Activated naive CD4-positive, alpha-beta T cell treated with anti-CD3 and anti-CD28 coated beads for 36 hours (primary cell): ENCODE measurements at regions of chr6 and their contacts with region 1.

Region 1: DNA sequence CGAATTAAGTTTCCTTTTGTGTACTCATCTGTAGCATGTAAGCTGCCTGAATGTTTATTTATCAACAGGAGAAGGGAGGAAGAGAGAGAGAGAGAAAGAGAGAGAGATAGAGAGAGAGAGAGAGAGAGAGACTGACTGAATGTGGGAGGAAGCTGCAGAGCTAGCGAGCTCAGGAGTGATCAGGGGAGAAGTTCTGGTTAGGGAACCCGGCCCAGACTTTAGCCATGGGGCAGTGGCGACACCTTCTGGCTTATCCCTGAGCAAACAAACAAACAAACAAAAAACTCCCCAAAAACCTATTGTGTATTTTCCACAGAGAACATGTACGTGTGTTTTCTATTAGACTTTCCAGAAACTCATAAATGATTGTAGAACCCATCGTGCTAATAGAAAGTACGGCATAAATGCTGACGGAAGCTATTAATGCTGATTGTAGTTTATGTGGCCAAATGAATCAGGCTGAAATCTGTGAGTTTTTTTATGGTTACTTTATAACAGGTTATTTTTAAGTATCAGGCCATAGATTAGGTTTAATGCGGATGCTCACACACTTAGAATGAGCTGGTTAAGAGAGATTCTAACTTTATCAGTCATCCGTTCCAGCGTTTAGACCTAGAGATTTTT is 92.8 kb downstream of the CLIC5 start:
- DNase-seq: peak; percentile 83
- H3K4me3 Mint-ChIP-seq: no peak overlapping the region
- H3K27ac Mint-ChIP-seq: peak overlapping the region; percentile 71
- H3K4me1 Mint-ChIP-seq: peaks cover 34% of the 10 kb centered on the region
- H3K27me3 Mint-ChIP-seq: peaks cover 12% of the 10 kb centered on the region

Region 2: DNA sequence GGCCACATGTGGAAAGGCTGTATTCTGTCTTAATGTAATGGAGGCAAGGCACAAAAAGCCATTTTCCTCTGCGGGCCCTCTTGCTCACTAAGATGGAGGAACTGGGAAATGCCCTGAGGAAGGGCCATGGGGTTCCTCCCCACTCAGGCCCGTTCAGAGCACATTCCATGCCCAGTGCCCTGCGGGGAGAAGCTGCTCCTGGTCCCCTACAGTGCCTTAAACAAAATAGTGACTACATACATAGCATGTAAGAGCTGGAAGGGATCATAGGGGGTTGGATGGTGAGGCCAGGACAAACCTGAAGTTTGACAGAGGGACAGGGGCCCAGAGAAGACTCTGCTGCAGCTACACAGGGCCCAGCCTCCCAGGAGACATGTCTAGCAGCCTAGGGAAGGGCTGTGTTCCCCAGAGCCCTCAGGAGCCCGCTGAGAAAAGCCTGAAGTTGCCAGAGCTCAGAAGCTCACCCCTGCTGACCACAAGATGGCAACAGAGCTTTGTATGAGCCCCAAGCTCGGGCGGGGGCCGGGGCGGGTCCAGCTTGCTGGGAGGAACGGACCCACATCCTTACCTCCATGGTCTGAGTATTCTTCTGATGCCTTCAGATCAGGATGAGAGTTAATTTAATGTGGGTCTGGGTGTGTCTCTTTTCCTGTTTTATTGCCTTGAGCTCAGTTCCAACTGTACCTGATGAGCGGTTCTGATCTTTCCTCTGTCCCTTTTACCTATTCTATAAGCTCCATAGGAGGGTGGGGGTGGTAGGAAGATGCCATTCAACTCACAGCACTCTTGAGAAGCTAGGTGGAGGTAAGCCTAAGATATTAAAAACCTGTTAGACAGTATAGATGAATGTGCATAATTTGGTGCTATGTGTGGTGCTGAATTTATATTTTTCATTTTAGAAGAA is 1292.5 kb before region 1 on chr6:
- CTCF ChIA-PET with region 1: interaction called, 4 read pairs
- intact Hi-C with region 1: loop called (anchors 5 kb)
- DNase-seq: peak; percentile 50
- H3K4me3 Mint-ChIP-seq: no peak overlapping the region
- H3K27ac Mint-ChIP-seq: no peak overlapping the region
- H3K4me1 Mint-ChIP-seq: peaks cover 13% of the 10 kb centered on the region
- H3K27me3 Mint-ChIP-seq: no peaks in the 10 kb centered on the region

Region 3: DNA sequence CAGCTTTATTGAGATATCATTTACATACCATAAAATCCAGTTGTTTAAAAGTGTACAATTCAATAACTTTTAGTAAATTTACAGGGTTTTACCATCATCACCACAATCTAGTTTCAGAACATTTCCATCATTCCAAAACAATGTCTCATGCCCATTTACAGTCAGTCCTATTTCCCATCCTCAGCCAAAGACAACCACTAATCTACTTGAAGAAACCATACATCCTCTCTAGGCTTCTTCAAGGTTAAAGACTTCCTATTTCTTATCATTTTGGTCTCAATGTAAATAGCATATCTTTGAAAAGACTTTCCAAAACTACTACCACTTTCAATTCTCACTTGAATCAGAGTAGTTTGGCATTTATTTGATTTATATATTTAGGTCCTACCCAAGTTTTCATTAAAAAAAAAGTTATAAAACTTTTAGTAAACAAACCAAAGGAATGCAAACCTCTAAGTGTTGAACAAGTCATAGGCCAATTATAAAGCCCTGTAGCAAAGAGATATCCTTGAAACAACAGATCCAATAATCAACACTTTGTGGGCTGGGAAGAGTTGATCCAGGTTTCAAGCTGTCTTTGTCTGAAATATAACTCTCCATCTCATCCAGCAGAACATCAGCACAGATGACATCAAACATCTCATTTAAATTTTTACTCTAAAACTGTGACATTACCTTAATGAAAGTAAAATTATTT is 806.0 kb before region 1 on chr6:
- CTCF ChIA-PET with region 1: no interaction called
- intact Hi-C with region 1: loop called (anchors 10 kb)
- DNase-seq: no peak
- H3K4me3 Mint-ChIP-seq: no peak overlapping the region
- H3K27ac Mint-ChIP-seq: peak overlapping the region; percentile 52
- H3K4me1 Mint-ChIP-seq: peaks cover 24% of the 10 kb centered on the region
- H3K27me3 Mint-ChIP-seq: no peaks in the 10 kb centered on the region

Region 4: DNA sequence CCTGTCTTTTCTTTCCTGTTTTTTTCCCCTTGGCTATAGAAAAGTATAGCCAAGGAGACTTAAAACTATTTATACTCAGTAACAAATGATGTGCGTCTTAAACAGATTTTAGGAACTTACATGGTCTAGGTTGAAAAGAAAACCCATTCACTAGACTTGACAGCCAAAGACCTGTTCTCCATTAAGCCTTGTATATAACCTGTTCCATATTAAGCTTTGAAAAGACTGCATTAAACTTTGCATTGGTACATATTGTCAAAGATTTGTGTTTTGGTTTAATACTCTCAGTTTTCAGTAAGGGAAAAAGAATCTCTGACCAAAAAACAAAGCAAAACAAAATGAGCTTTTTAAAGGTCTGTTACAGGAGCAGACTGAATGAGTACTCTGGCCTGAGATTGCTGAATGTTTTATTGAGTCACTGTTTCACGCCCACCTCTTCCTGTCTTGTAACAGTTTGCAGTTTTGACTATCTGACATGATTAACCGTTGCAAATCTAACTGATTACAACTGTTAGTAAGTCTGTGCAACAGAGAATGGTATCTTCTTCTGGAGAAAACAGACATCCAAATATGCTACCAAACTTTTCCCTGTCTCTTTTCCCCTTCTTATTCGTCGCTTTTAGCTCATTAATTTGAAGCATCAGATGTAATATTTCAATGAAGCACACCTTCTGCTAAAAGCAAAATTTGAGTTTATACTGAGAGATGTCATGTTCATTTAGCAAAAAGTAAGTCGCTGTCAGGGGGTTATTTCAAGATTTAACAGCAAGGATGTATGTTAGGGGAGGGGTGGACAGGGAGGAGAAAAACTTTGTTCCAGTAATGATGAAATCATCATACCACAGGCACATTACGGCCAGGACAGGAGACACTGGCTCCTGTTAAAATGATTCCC is 486.0 kb before region 1 on chr6:
- CTCF ChIA-PET with region 1: interaction called, 3 read pairs
- intact Hi-C with region 1: loop called (anchors 5 kb)
- DNase-seq: peak; percentile 77
- H3K4me3 Mint-ChIP-seq: peak overlapping the region; percentile 35
- H3K27ac Mint-ChIP-seq: peak overlapping the region; percentile 76
- H3K4me1 Mint-ChIP-seq: peaks cover 58% of the 10 kb centered on the region
- H3K27me3 Mint-ChIP-seq: no peaks in the 10 kb centered on the region

Region 5: GRCh38 chr6:45737331-45738056 is 185.3 kb before region 1 on chr6:
- CTCF ChIA-PET with region 1: interaction called, 8 read pairs
- intact Hi-C with region 1: loop called (anchors 1 kb)
- DNase-seq: peak; percentile 38
- H3K4me3 Mint-ChIP-seq: no peak overlapping the region
- H3K27ac Mint-ChIP-seq: peak overlapping the region; percentile 9
- H3K4me1 Mint-ChIP-seq: peaks cover 32% of the 10 kb centered on the region
- H3K27me3 Mint-ChIP-seq: peaks cover 29% of the 10 kb centered on the region

Region 6: GRCh38 chr6:45911691-45912090 is 11.1 kb before region 1 on chr6:
- CTCF ChIA-PET with region 1: interaction called, 16 read pairs
- intact Hi-C with region 1: no loop called
- DNase-seq: no peak
- H3K4me3 Mint-ChIP-seq: no peak overlapping the region
- H3K27ac Mint-ChIP-seq: no peak overlapping the region
- H3K4me1 Mint-ChIP-seq: no peaks in the 10 kb centered on the region
- H3K27me3 Mint-ChIP-seq: peaks cover 2% of the 10 kb centered on the region

Region 7: GRCh38 chr6:45946352-45946751 is 23.5 kb after region 1 on chr6:
- CTCF ChIA-PET with region 1: no interaction called
- intact Hi-C with region 1: no loop called
- DNase-seq: no peak
- H3K4me3 Mint-ChIP-seq: no peak overlapping the region
- H3K27ac Mint-ChIP-seq: no peak overlapping the region
- H3K4me1 Mint-ChIP-seq: no peaks in the 10 kb centered on the region
- H3K27me3 Mint-ChIP-seq: no peaks in the 10 kb centered on the region

Region 8: DNA sequence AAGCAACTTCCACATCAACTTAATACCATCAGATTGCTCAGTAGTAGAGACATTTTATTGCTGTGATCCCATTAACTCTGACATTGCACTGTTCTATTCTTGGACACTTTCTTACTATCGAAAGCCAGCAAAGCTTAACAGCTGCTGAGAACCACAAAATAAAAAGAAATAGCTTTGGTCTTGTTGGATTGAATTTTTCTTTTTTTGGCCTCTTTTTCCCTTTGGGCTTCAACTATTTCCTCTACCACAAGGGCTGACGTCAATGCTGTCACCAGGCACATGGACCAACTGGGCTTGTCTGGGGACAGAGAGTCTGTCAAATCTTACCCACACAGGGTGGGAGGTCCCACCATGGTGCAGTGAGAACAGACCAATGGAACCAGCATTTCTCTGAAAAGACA is 311.3 kb after region 1 on chr6:
- CTCF ChIA-PET with region 1: no interaction called
- intact Hi-C with region 1: no loop called
- DNase-seq: no peak
- H3K4me3 Mint-ChIP-seq: no peak overlapping the region
- H3K27ac Mint-ChIP-seq: no peak overlapping the region
- H3K4me1 Mint-ChIP-seq: no peaks in the 10 kb centered on the region
- H3K27me3 Mint-ChIP-seq: peaks cover 28% of the 10 kb centered on the region